GM23248 (cell line): ENCODE measurements at regions of chr4 and their contacts with region 1.

Region 1: DNA sequence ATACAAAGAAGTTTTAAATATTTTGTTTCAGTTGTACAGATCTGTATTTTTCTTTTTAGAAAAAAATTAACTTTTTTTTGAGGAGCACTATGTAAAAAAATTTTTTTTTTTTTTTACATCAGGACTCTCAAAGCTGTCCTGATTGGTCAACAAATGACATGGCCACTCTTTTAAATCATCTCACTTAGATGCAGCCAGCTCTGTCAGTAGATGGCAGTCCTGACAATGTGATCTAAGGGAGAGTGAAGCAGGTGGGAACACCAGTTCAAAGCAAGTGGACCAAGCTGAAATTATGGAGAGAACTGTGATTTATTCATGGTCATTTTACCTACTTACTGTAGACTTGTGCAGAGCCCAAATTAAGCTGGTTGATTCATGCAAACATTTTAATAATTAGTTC is 174.6 kb upstream of the GPRIN3 start:
- DNase-seq: peak; percentile 24
- H3K4me3 ChIP-seq: no peak overlapping the region
- H3K27ac ChIP-seq: no peak overlapping the region
- H3K4me1 ChIP-seq: peaks cover 10% of the 10 kb centered on the region
- H3K27me3 ChIP-seq: no peaks in the 10 kb centered on the region

Region 2: GRCh38 chr4:88447371-88448095 is 1034.7 kb before region 1 on chr4:
- in situ Hi-C with region 1: no loop called
- DNase-seq: no peak
- H3K4me3 ChIP-seq: no peak overlapping the region
- H3K27ac ChIP-seq: no peak overlapping the region
- H3K4me1 ChIP-seq: no peaks in the 10 kb centered on the region
- H3K27me3 ChIP-seq: no peaks in the 10 kb centered on the region

Region 3: DNA sequence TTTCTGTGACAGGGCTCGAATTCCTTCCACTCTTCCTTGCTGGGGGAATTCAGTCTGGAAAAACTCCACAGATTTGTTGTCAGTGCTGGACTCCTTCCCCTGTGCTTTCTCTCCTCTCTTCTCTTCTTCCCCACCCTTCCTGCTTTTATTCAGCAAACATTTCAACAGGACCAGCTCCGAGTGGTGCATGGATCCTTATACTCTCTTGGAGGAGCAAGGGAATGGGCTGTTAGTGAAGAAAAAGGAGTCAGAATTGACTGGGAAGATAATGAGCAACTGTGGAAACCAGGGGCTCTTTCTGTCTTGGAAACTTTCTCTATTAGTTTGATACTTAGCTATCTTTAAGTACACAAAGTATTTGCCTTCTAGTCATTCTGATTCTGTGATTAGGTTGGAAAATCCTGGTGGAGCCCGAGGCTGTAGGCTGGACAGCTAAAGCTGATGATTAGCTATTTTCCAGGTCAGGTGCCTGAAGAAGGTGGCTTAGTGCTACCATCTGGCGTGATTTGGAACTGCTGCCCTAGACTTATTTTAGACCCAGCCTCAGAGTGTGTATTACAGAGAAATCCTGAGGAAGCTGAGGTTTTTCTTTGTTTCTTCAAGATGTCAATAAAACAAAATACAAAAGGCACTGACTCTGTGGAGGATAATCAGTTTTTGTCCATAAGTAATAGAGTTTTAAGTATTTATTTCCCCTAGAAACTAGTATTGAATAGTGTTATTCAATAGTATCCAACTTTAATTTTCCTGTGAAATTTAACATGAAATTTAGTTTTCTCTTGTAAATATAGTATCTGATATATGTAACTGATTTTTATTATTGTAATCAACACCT is 823.0 kb before region 1 on chr4:
- in situ Hi-C with region 1: no loop called
- DNase-seq: peak; percentile 87
- H3K4me3 ChIP-seq: no peak overlapping the region
- H3K27ac ChIP-seq: peak overlapping the region; percentile 95
- H3K4me1 ChIP-seq: peaks cover 49% of the 10 kb centered on the region
- H3K27me3 ChIP-seq: no peaks in the 10 kb centered on the region

Region 4: GRCh38 chr4:89674969-89675368 is 192.7 kb after region 1 on chr4:
- in situ Hi-C with region 1: no loop called
- DNase-seq: no peak
- H3K4me3 ChIP-seq: no peak overlapping the region
- H3K27ac ChIP-seq: no peak overlapping the region
- H3K4me1 ChIP-seq: no peaks in the 10 kb centered on the region
- H3K27me3 ChIP-seq: peaks cover 5% of the 10 kb centered on the region; the same call in 1 of the 2 replicates

Region 5: GRCh38 chr4:89894649-89895550 is 412.7 kb after region 1 on chr4 and contains the start of gene MMRN1:
- in situ Hi-C with region 1: loop called (anchors 25 kb)
- DNase-seq: no peak
- H3K4me3 ChIP-seq: no peak within 1 kb of the TSS
- H3K27ac ChIP-seq: no peak within 1 kb of the TSS
- H3K4me1 ChIP-seq: no peaks in the 10 kb centered on the region
- H3K27me3 ChIP-seq: peaks cover 36% of the 10 kb centered on the region
- total RNA-seq, gene MMRN1: not detected in 2 replicates